Panc1 (cell line): ENCODE measurements at regions of chr15 and their contacts with region 1.

Region 1: DNA sequence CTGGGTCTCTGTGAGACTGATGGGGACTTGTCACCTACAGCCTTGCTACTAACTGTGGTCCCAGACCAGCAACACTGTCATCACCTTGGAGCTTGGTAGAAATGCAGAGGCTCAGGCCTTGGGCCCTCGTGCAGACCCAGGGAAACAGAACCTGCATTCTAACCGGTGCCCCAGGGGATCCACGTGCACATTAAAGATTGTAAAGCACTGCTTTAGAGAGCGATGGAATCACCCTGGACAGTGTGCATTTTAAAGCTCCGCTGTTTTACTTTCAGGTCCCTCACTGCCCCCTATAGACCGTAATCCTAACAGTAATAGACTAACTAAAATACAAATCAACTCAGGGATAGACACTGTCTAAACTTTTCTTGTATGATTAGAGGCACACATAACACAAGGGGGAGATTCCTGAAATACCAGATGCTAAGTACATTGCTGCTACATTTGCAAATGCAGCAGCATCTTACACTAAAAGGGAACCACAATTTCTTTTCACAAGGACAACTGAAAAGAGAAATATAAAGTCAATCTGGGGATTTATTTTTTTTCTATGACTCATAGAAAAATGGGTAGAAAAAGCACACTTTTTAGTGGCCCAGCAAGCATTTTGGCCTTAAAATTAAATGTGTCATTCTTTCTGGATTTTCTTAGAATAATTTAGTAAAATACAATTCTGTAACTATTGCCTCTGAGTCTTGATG is 10.5 kb upstream of the SH3GL3 start:
- DNase-seq: no peak
- ATAC-seq: peak; percentile 75; the same call in 1 of the 2 replicates
- H3K4me3 ChIP-seq: no peak overlapping the region
- H3K27ac ChIP-seq: no peak overlapping the region
- H3K4me1 ChIP-seq: no peaks in the 10 kb centered on the region
- H3K27me3 ChIP-seq: peaks cover 5% of the 10 kb centered on the region
- CTCF ChIP-seq: peak; percentile 70

Region 2: DNA sequence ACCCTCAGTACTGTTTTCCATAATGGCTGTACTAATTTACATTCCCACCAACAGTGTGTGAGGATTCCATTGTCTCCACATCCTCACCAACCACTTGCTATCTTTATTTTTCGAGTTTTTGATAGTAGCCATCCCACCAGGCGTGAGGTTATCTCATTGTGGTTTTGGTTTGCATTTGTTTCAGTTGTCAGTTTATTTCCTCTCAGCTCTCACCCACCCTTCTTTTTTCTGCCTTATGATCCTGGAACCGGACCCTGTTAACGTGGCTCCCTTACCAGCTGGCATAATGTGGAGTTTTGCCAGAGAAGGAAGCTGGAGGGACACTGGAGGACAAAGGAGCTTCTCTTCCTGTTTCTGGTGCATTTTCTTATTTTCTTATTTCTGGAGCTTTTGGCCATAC is 14.5 kb before region 1 on chr15:
- CTCF ChIA-PET with region 1: no interaction called
- POLR2A ChIA-PET with region 1: no interaction called
- in situ Hi-C with region 1: no loop called
- intact Hi-C with region 1: no loop called
- DNase-seq: no peak
- ATAC-seq: no peak
- H3K4me3 ChIP-seq: no peak overlapping the region
- H3K27ac ChIP-seq: no peak overlapping the region
- H3K4me1 ChIP-seq: no peaks in the 10 kb centered on the region
- H3K27me3 ChIP-seq: no peaks in the 10 kb centered on the region
- CTCF ChIP-seq: no peak

Region 3: GRCh38 chr15:83559310-83559966 is 122.8 kb after region 1 on chr15:
- CTCF ChIA-PET with region 1: interaction called, 5 read pairs
- POLR2A ChIA-PET with region 1: no interaction called
- in situ Hi-C with region 1: no loop called
- intact Hi-C with region 1: loop called (anchors 1 kb)
- DNase-seq: peak; percentile 28
- ATAC-seq: peak; percentile 95
- H3K4me3 ChIP-seq: no peak overlapping the region
- H3K27ac ChIP-seq: no peak overlapping the region
- H3K4me1 ChIP-seq: no peaks in the 10 kb centered on the region
- H3K27me3 ChIP-seq: no peaks in the 10 kb centered on the region
- CTCF ChIP-seq: peak; percentile 89

Region 4: DNA sequence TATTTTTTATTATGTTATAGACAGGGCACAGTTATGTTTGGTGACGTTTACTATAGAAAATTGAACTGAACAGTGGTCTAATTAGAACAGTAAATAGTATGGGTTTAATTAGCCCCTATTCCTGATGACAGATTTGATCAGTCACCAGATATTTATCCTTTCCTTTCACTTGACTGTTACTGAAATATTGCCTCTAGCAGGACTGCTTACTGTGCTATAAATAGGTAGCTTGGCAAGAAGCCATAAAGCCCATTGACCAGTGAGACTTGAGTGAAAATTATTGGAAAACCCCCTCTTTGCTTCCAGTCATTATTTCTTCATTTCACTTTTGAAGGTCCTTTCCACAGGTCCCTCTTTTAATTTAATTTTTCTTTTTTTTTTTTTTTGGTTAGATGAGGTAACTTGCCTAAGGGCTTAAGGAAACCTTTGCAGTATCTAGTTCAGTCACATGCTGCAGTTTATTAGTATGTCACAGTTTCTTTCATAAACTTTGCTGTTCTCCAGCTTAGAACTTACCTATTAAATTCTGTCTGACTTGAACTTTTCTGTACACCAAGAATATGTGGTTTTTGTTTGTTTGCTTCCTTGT is 332.9 kb after region 1 on chr15:
- CTCF ChIA-PET with region 1: no interaction called
- POLR2A ChIA-PET with region 1: no interaction called
- in situ Hi-C with region 1: no loop called
- intact Hi-C with region 1: no loop called
- DNase-seq: no peak
- ATAC-seq: no peak
- H3K4me3 ChIP-seq: no peak overlapping the region
- H3K27ac ChIP-seq: no peak overlapping the region
- H3K4me1 ChIP-seq: no peaks in the 10 kb centered on the region
- H3K27me3 ChIP-seq: no peaks in the 10 kb centered on the region
- CTCF ChIP-seq: no peak